ENCODE measurements at regions of chr19 and their contacts with region 1.

Region 1: GRCh38 chr19:16324384-16325160 is at the start of gene KLF2:
- DNase-seq: peak; percentile 84 to 90
- ATAC-seq: peak; percentile 73 to 85
- H3K4me3 ChIP-seq: peak within 1 kb of the TSS; percentile 67 to 95 (median 76)
- H3K27ac ChIP-seq: peak within 1 kb of the TSS; percentile 90 to 99 (median 92)
- H3K4me1 ChIP-seq: peaks cover 28 to 30% of the 10 kb centered on the region in 2 donors
- H3K27me3 ChIP-seq: no peaks in the 10 kb centered on the region
- CTCF ChIP-seq: no peak
- POLR2A ChIP-seq: peak; percentile 98 to 100
- total RNA-seq, gene KLF2: 6.8 to 45.6 (median 32.0) TPM

Region 2: GRCh38 chr19:16247353-16248182 is 77.0 kb before region 1 on chr19:
- in situ Hi-C with region 1: loop called in 1 of 4 experiments (anchors 10 kb)
- intact Hi-C with region 1: loop called (anchors 5 kb)
- DNase-seq: peak; percentile 69 to 80
- ATAC-seq: peak; percentile 93 to 95
- H3K4me3 ChIP-seq: no peak overlapping the region
- H3K27ac ChIP-seq: peak overlapping the region in 1 of 4 donors; percentile 26
- H3K4me1 ChIP-seq: no peaks in the 10 kb centered on the region
- H3K27me3 ChIP-seq: peaks cover 0 to 2% (median 0%) of the 10 kb centered on the region in 3 donors
- CTCF ChIP-seq: peak; percentile 93 to 98 (median 95)
- POLR2A ChIP-seq: no peak

Region 3: DNA sequence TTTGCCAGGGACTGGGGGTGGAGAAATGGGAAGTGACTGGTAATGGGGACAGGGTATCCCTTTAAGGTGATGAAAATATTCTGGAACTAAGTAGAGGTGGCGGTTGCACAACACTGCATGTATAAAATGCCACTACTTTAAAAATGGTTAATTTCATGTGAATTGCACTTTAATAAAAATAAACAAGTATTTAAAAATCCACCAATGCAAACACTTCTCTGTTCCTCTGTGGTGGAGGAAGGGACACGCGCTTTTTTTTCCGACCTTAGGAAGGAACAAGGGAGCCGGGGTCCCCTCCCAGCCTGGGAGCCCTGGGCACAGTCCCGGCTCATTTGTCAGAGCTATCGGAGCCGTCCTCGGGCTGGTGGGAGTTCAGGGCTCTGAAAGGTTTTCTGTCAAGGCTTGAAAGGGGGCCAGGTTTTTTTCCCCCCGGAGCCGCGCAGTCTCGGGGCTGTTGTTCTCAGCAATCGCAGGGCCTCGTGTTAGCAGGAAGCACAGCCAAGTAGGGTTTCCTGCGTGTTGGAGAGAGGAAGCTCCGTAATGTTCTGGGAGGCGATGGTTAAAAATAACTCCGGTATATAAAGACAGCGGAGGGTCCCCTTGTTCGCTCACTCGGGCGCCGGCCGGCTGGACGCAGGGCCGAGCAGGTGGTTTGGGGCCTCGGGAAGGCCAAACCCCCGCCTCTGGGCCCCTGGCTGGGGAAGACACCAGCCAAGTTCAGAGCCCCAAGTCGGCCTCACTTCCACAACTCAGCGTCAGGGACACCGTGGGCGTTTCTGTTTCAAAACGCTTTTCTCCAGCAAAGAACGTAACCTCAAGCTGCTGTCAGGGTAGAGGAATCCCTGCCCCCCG is 41.1 kb before region 1 on chr19:
- in situ Hi-C with region 1: no loop called
- intact Hi-C with region 1: loop called (anchors 2 kb)
- DNase-seq: peak; percentile 71 to 77
- ATAC-seq: peak; percentile 75 to 81
- H3K4me3 ChIP-seq: peak overlapping the region; percentile 41 to 50 (median 45)
- H3K27ac ChIP-seq: peak overlapping the region; percentile 82 to 95 (median 90)
- H3K4me1 ChIP-seq: peaks cover 31 to 43% of the 10 kb centered on the region in 2 donors
- H3K27me3 ChIP-seq: no peaks in the 10 kb centered on the region
- CTCF ChIP-seq: no peak
- POLR2A ChIP-seq: peak; percentile 78 to 92

Region 4: GRCh38 chr19:16338470-16339360 is 14.1 kb after region 1 on chr19:
- in situ Hi-C with region 1: no loop called
- intact Hi-C with region 1: loop called (anchors 2 kb)
- DNase-seq: no peak
- ATAC-seq: peak; percentile 3 to 12
- H3K4me3 ChIP-seq: no peak overlapping the region
- H3K27ac ChIP-seq: peak overlapping the region; percentile 41 to 84 (median 50)
- H3K4me1 ChIP-seq: peaks cover 33 to 36% of the 10 kb centered on the region in 2 donors
- H3K27me3 ChIP-seq: no peaks in the 10 kb centered on the region
- CTCF ChIP-seq: peak in 3 of 5 experiments; percentile 5 to 18 (median 17)
- POLR2A ChIP-seq: no peak

Region 5: DNA sequence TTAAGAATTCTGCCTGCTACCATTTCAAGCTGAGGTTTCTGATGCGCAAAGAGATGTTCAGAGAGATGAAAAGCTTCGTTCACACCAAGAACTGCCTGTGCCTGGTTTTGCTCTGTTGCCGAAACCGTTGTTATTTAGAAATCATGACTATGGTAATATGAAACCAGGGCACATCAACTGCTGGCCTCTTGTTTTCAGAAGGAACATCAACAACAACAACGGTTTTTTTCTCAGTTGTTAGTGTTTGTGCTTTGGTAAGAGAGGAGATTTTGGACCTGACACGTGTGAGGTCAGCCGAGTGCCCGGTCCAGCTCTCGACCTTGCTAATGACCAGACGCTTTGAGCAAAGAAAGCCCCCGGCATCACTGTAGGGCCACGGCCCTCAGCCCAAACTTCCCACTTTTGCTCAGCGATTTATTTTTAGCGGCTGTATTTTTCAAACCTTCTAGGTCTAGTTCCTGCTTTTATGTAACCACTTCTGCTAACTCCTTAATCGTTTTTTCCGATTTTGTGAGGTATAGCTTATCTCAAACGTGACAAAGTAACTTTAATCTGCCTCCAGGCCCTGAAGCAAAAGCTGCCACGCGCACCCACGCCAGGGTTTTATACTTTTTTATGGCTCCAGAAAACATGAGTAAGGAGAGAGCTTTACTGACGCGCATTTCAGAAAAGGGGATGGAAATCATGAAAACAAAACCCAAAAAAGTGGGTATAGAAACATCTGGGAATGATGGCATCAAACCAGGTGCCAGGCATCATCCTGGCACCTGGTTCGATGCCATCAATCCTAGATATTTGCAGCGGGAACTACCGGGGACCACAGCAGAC is 42.1 kb after region 1 on chr19:
- in situ Hi-C with region 1: no loop called
- intact Hi-C with region 1: loop called (anchors 5 kb)
- DNase-seq: peak; percentile 37 to 73
- ATAC-seq: peak; percentile 92
- H3K4me3 ChIP-seq: peak overlapping the region in 2 of 4 donors; percentile 8 to 17
- H3K27ac ChIP-seq: peak overlapping the region; percentile 35 to 86 (median 70)
- H3K4me1 ChIP-seq: peaks cover 18 to 59% of the 10 kb centered on the region in 2 donors
- H3K27me3 ChIP-seq: no peaks in the 10 kb centered on the region
- CTCF ChIP-seq: no peak
- POLR2A ChIP-seq: peak in 1 of 2 donors; percentile 36

Region 6: DNA sequence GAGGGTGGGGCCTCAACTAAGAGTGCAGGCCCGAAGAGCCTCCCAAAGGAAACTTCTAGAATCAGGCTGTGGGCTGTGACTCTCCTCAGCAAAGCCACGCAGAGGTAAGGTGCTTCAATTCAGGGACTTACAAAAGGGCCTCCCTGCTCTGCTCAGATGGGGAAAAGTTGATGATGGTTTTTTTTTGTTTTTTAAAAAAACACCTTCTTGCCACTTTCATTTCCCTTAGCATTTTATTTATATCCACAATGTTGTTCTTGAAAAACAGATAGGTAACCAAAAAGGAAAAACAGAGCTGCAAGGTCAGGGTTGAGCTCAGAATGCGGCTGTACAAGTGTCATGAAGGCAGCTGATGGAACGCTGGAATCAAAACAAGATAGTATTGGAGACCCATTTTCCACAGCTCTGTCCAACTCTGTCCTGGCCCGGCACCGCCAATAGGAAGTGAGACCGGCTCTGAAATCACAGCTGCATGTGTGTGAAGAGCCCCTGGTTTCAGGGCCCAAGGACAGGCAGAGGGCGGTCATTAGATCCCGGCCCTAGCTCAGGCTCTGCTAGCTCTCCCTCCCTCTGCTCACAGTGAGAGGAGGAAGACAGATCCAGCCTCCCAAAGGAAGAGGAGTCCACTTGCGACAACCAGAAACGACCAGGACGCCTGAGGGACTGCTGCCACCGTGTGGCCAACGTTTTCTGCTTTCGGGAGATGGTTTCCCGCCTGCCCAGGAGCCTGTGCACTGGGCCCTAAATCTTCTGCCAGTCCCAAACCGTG is 58.4 kb after region 1 on chr19:
- in situ Hi-C with region 1: no loop called
- intact Hi-C with region 1: loop called (anchors 1 kb)
- DNase-seq: peak; percentile 79 to 87
- ATAC-seq: peak; percentile 62 to 79
- H3K4me3 ChIP-seq: peak overlapping the region in 2 of 4 donors; percentile 7 to 12
- H3K27ac ChIP-seq: peak overlapping the region; percentile 82 to 92 (median 90)
- H3K4me1 ChIP-seq: peaks cover 46 to 58% of the 10 kb centered on the region in 2 donors
- H3K27me3 ChIP-seq: no peaks in the 10 kb centered on the region
- CTCF ChIP-seq: peak; percentile 89 to 93 (median 90)
- POLR2A ChIP-seq: peak; percentile 30 to 61